ENCODE measurements at regions of chr12 and their contacts with region 1.

Region 1: DNA sequence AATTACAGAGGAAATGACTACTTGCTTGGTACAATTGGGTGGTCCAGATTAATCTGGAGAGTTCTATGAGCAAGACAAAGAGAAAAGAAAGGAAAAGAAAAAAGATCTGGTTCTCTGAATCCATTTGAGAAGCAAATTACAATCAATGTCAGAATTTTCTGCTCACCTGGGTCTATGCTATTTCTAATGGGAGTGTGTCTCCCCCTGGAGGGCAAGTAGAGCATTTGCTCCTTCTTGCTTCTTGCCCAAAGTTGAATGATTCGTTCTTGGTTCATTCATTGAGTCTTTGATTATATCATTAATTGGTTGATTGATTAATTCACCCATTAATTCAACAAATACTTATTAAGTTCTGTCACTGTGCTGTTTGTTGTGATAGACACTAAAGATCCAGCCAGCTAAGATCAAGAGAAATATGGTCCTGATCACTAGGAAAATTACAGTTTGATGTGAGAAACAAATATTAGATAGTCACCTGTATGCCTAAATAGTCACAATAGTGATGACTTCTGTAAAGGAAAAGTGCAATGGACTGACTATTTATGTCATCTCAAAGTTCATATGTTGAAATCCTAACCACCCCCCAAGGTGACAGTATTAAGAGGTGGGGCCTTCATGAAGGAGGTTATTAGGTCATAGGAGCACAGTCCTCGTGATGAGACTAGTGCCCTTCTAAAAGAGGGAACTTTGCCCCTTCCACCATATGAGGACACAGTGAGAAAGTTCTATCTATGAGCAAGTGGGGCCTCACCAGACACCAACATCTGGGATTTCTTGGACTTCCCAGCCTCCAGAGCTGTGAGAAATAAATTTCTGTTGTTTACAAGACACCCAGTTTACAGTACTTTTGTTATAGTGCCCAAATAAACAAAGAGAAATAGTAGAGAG is 8.0 kb upstream of the ASB8 start:
- DNase-seq: peak; percentile 59 to 75
- ATAC-seq: peak in 1 of 2 experiments; percentile 85; a peak in 5 of 6 replicates
- H3K4me3 ChIP-seq: no peak overlapping the region
- H3K27ac ChIP-seq: no peak overlapping the region
- H3K4me1 ChIP-seq: no peaks in the 10 kb centered on the region
- CTCF ChIP-seq: peak; percentile 95
- EP300 ChIP-seq: no peak
- POLR2A ChIP-seq: no peak
- RAD21 ChIP-seq: peak; percentile 84 to 91

Region 2: GRCh38 chr12:48084066-48084465 is 81.3 kb before region 1 on chr12:
- CTCF ChIA-PET with region 1: interaction called, 11 read pairs
- POLR2A ChIA-PET with region 1: no interaction called
- DNase-seq: peak in 1 of 2 experiments; percentile 34
- ATAC-seq: peak in 1 of 2 experiments; percentile 46; a peak in 1 of 6 replicates
- H3K4me3 ChIP-seq: no peak overlapping the region
- H3K27ac ChIP-seq: no peak overlapping the region
- H3K4me1 ChIP-seq: no peaks in the 10 kb centered on the region
- CTCF ChIP-seq: peak; percentile 43
- EP300 ChIP-seq: no peak
- POLR2A ChIP-seq: no peak
- RAD21 ChIP-seq: peak; percentile 38 to 52

Region 3: GRCh38 chr12:48142818-48143674 is 22.3 kb before region 1 on chr12:
- CTCF ChIA-PET with region 1: interaction called, 19 read pairs
- POLR2A ChIA-PET with region 1: no interaction called
- DNase-seq: no peak
- ATAC-seq: no peak
- H3K4me3 ChIP-seq: no peak overlapping the region
- H3K27ac ChIP-seq: no peak overlapping the region
- H3K4me1 ChIP-seq: no peaks in the 10 kb centered on the region
- CTCF ChIP-seq: no peak
- EP300 ChIP-seq: no peak
- POLR2A ChIP-seq: no peak
- RAD21 ChIP-seq: no peak

Region 4: GRCh38 chr12:48175613-48176416 is 10.5 kb after region 1 on chr12:
- CTCF ChIA-PET with region 1: interaction called, 41 read pairs
- POLR2A ChIA-PET with region 1: no interaction called
- DNase-seq: no peak
- ATAC-seq: no peak; a peak in 1 of 6 replicates
- H3K4me3 ChIP-seq: no peak overlapping the region
- H3K27ac ChIP-seq: no peak overlapping the region
- H3K4me1 ChIP-seq: 0 out of 3 replicates have a peak, but pooled peaks cover 4% of the 10 kb centered on the region
- CTCF ChIP-seq: no peak
- EP300 ChIP-seq: no peak
- POLR2A ChIP-seq: no peak
- RAD21 ChIP-seq: no peak

Region 5: GRCh38 chr12:48183091-48183875 is 17.9 kb after region 1 on chr12 and contains the start of gene CCDC184:
- CTCF ChIA-PET with region 1: interaction called, 41 read pairs
- POLR2A ChIA-PET with region 1: interaction called, 4 read pairs
- DNase-seq: peak; percentile 83 to 90
- ATAC-seq: peak; percentile 85 to 88
- H3K4me3 ChIP-seq: peak within 1 kb of the TSS; percentile 64
- H3K27ac ChIP-seq: peak within 1 kb of the TSS; percentile 64 to 84
- H3K4me1 ChIP-seq: peaks cover 7% of the 10 kb centered on the region; the same call in 2 of the 3 replicates
- CTCF ChIP-seq: peak; percentile 42
- EP300 ChIP-seq: no peak
- POLR2A ChIP-seq: peak; percentile 47
- RAD21 ChIP-seq: no peak; a peak in 1 of 5 replicates
- polyA plus RNA-seq, gene CCDC184: 2.4 and 2.7 TPM in 2 replicates

Region 6: DNA sequence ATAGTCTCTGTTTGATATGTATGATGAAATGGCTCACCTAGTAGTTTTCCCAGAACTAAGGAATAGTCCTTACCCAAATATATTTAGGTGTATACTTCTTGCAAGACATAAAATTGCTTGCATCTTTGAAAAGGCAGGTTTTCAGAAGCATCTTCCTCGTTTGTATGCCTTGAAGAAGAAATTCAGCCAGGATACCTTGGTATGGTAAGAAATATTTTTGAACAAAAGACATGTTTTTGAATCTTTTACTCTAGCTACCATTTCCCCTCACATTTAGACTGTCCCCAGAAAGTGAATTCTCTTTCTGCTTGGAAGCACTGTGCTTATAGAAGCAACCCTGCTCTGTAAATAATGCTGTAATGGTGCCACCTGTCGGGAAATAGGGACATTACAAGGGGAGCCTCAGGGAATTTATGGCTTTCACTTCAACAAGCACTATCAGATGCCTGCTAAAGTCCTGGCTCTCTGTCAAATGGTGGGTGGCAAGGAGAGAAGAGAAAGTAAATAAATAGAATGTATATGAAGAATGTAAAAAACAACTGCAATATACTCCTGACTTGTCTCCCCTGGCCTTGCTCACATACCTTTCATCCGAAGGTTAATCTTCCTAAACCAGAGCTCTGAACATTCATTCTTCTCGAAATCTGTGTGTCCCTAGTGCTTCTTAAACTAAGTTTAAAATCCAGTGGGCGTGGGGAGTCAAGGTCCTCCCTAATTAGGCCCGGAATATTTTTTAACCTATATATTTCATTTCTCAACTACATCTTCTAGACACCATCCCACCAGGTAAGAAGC is 24.2 kb after region 1 on chr12:
- CTCF ChIA-PET with region 1: interaction called, 12 read pairs
- POLR2A ChIA-PET with region 1: interaction called, 4 read pairs
- DNase-seq: peak; percentile 56 to 74
- ATAC-seq: peak; percentile 76 to 81
- H3K4me3 ChIP-seq: no peak overlapping the region
- H3K27ac ChIP-seq: no peak overlapping the region
- H3K4me1 ChIP-seq: peaks cover 10% of the 10 kb centered on the region; the same call in 1 of the 3 replicates
- CTCF ChIP-seq: peak; percentile 83
- EP300 ChIP-seq: no peak
- POLR2A ChIP-seq: no peak
- RAD21 ChIP-seq: peak; percentile 78 to 87

Region 7: DNA sequence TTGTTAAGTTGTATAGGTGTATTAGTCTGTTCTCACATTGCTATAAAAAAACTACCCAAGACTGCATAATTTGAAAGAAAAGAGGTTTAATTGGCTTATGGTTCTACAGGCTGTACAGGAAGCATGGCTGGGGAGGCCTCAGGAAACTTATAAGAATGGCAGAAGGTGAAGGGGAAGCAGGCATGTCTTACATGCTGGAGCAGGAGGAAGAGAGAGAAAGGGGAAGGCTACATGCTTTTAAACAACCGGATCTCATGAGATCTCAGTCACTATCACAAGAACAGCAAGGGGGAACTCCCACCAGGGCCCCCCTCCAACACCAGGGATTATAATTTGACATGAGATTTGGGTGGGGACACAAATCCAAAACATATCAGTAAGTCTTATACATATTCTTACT is 98.3 kb after region 1 on chr12:
- CTCF ChIA-PET with region 1: no interaction called
- POLR2A ChIA-PET with region 1: no interaction called
- DNase-seq: no peak
- ATAC-seq: no peak
- H3K4me3 ChIP-seq: no peak overlapping the region
- H3K27ac ChIP-seq: no peak overlapping the region
- H3K4me1 ChIP-seq: no peaks in the 10 kb centered on the region
- CTCF ChIP-seq: no peak
- EP300 ChIP-seq: no peak
- POLR2A ChIP-seq: no peak
- RAD21 ChIP-seq: no peak

Region 8: DNA sequence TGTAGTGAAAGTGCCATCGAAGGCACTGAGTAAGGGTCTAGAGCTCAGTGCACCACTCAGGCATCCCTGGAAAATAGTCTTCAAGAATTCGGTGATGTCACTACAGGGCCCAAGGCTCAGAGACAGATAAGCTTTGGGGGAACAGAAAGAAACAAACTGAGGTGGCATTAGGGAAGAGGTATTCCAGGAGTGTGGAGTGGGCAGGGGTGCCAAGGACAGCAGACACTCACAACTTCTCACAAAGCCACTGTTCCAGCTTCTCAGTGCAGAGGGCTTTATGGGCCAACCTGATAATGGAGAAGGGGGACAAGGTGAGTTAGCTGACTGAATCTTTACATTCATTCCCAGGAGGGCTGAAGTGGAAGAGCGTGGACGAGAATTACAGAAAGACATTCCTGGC is 402.4 kb after region 1 on chr12:
- CTCF ChIA-PET with region 1: no interaction called
- POLR2A ChIA-PET with region 1: no interaction called
- DNase-seq: no peak
- ATAC-seq: no peak
- H3K4me3 ChIP-seq: no peak overlapping the region
- H3K27ac ChIP-seq: no peak overlapping the region
- H3K4me1 ChIP-seq: no peaks in the 10 kb centered on the region
- CTCF ChIP-seq: no peak
- EP300 ChIP-seq: no peak
- POLR2A ChIP-seq: no peak
- RAD21 ChIP-seq: no peak